B cell (primary cell): ENCODE measurements at regions of chr19 and their contacts with region 1.

Region 1: GRCh38 chr19:11435058-11435832 is at the starts of genes ODAD3 and PRKCSH:
- DNase-seq: peak; percentile 99
- ATAC-seq: peak; percentile 88
- H3K4me3 ChIP-seq: peak within 1 kb of the TSS; percentile 76 to 95 (median 80)
- H3K4me3 Mint-ChIP-seq: peak within 1 kb of the TSS; percentile 96
- H3K27ac ChIP-seq: peak within 1 kb of the TSS; percentile 70 to 92
- H3K27ac Mint-ChIP-seq: peak within 1 kb of the TSS; percentile 88
- H3K4me1 ChIP-seq: peaks cover 27 to 40% of the 10 kb centered on the region in 2 donors
- H3K4me1 Mint-ChIP-seq: peaks cover 29% of the 10 kb centered on the region
- H3K27me3 ChIP-seq: no peaks in the 10 kb centered on the region
- H3K27me3 Mint-ChIP-seq: no peaks in the 10 kb centered on the region
- CTCF ChIP-seq: peak; percentile 94
- total RNA-seq, gene ODAD3: 0.27 and 0.62 TPM in 2 replicates
- total RNA-seq, gene PRKCSH: 364 and 402 TPM in 2 replicates

Region 2: DNA sequence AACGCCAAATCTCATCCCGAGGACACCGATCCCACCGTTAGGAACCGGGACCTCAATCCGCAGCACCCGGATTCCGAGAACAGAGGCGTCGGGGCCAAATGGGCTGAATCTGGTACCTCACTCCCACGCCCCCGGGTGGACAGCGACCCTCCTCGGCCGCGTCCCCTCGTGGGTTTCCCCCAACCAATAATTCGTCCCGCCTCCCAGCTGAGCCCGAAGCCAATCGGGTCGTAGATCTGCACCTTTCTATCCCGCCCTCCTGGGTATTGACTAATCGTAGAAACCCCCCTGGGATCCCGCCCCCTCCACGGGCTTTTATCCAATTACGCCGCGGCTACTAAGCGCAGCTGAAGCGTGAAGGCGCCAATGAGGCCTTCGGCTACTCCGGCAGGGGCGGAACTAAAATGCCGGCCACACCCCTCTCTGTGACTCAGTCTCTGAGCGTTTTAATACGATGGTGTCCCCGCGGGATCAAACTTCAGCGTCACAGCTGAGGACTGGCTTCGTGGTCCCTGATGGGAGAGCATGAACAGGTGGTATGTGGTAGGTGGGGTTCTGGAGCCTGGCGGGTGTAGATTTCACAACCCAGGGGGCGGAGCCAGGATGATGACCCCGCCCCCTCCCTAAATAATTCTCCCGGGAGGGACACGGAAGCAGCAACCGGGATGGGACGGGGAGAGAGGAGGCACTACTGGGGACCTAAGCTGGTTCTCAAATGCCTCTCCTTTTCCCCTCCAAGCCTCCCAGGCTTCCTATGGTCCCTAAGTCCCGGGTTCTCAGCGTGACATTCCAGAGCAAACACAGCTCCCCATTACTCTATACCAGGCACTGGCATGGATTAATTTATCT is 88.9 kb before region 1 on chr19 and contains the starts of genes CCDC159 and TMEM205:
- CTCF ChIA-PET with region 1: no interaction called
- POLR2A ChIA-PET with region 1: no interaction called
- intact Hi-C with region 1: loop called (anchors 1 kb)
- DNase-seq: peak; percentile 99
- ATAC-seq: peak; percentile 97
- H3K4me3 ChIP-seq: peak within 1 kb of the TSS; percentile 67 to 97 (median 94)
- H3K4me3 Mint-ChIP-seq: peak within 1 kb of the TSS; percentile 99
- H3K27ac ChIP-seq: peak within 1 kb of the TSS; percentile 71 to 86
- H3K27ac Mint-ChIP-seq: peak within 1 kb of the TSS; percentile 96
- H3K4me1 ChIP-seq: peaks cover 11 to 20% of the 10 kb centered on the region in 2 donors
- H3K4me1 Mint-ChIP-seq: peaks cover 28% of the 10 kb centered on the region
- H3K27me3 ChIP-seq: no peaks in the 10 kb centered on the region
- H3K27me3 Mint-ChIP-seq: no peaks in the 10 kb centered on the region
- CTCF ChIP-seq: no peak
- total RNA-seq, gene CCDC159: 56.0 and 57.5 TPM in 2 replicates
- total RNA-seq, gene TMEM205: 48.5 and 53.4 TPM in 2 replicates

Region 3: GRCh38 chr19:11422163-11423021 is 12.9 kb before region 1 on chr19:
- CTCF ChIA-PET with region 1: interaction called, 17 read pairs
- POLR2A ChIA-PET with region 1: interaction called, 15 read pairs
- intact Hi-C with region 1: loop called (anchors 1 kb)
- DNase-seq: peak; percentile 92
- ATAC-seq: peak; percentile 85
- H3K4me3 ChIP-seq: peak overlapping the region in 4 of 5 experiments; percentile 40 to 57 (median 46)
- H3K4me3 Mint-ChIP-seq: peak overlapping the region; percentile 84
- H3K27ac ChIP-seq: peak overlapping the region in 1 of 2 donors; percentile 52
- H3K27ac Mint-ChIP-seq: peak overlapping the region; percentile 58
- H3K4me1 ChIP-seq: peaks cover 55 to 61% of the 10 kb centered on the region in 2 donors
- H3K4me1 Mint-ChIP-seq: peaks cover 52% of the 10 kb centered on the region
- H3K27me3 ChIP-seq: peaks cover 0 to 50% (median 24%) of the 10 kb centered on the region in 4 experiments
- H3K27me3 Mint-ChIP-seq: peaks cover 18% of the 10 kb centered on the region
- CTCF ChIP-seq: no peak

Region 4: GRCh38 chr19:11482384-11483050 is 47.3 kb after region 1 on chr19:
- CTCF ChIA-PET with region 1: interaction called, 5 read pairs
- POLR2A ChIA-PET with region 1: interaction called, 5 read pairs
- intact Hi-C with region 1: loop called (anchors 1 kb)
- DNase-seq: peak; percentile 93
- ATAC-seq: peak; percentile 79
- H3K4me3 ChIP-seq: peak overlapping the region in 4 of 5 experiments; percentile 20 to 48 (median 30)
- H3K4me3 Mint-ChIP-seq: peak overlapping the region; percentile 80
- H3K27ac ChIP-seq: no peak overlapping the region
- H3K27ac Mint-ChIP-seq: peak overlapping the region; percentile 80
- H3K4me1 ChIP-seq: peaks cover 37 to 42% of the 10 kb centered on the region in 2 donors
- H3K4me1 Mint-ChIP-seq: peaks cover 27% of the 10 kb centered on the region
- H3K27me3 ChIP-seq: peaks cover 0 to 46% (median 25%) of the 10 kb centered on the region in 4 experiments
- H3K27me3 Mint-ChIP-seq: peaks cover 34% of the 10 kb centered on the region
- CTCF ChIP-seq: peak; percentile 93

Region 5: GRCh38 chr19:11581740-11582139 is 146.5 kb after region 1 on chr19:
- CTCF ChIA-PET with region 1: no interaction called
- POLR2A ChIA-PET with region 1: no interaction called
- intact Hi-C with region 1: loop called (anchors 5 kb)
- DNase-seq: peak; percentile 93
- ATAC-seq: peak; percentile 85
- H3K4me3 ChIP-seq: peak overlapping the region in 4 of 5 experiments; percentile 8 to 58 (median 28)
- H3K4me3 Mint-ChIP-seq: peak overlapping the region; percentile 83
- H3K27ac ChIP-seq: peak overlapping the region; percentile 87 to 91
- H3K27ac Mint-ChIP-seq: peak overlapping the region; percentile 89
- H3K4me1 ChIP-seq: peaks cover 68 to 95% of the 10 kb centered on the region in 2 donors
- H3K4me1 Mint-ChIP-seq: peaks cover 67% of the 10 kb centered on the region
- H3K27me3 ChIP-seq: no peaks in the 10 kb centered on the region
- H3K27me3 Mint-ChIP-seq: no peaks in the 10 kb centered on the region
- CTCF ChIP-seq: no peak